ENCODE measurements at regions of chr3 and their contacts with region 1.

Region 1: GRCh38 chr3:18988614-18989229 is 159.6 kb upstream of the KCNH8 start:
- DNase-seq: peak in 4 of 5 donors; percentile 22 to 33 (median 32)
- H3K4me3 ChIP-seq: no peak overlapping the region
- H3K4me3 Mint-ChIP-seq: peak overlapping the region in 4 of 8 donors; percentile 2 to 52 (median 19)
- H3K27ac ChIP-seq: no peak overlapping the region
- H3K27ac Mint-ChIP-seq: no peak overlapping the region
- H3K4me1 ChIP-seq: no peaks in the 10 kb centered on the region
- H3K4me1 Mint-ChIP-seq: peaks cover 2 to 15% (median 12%) of the 10 kb centered on the region in 4 donors
- H3K27me3 ChIP-seq: peaks cover 6% of the 10 kb centered on the region
- H3K27me3 Mint-ChIP-seq: peaks cover 18 to 27% of the 10 kb centered on the region in 2 donors

Region 2: GRCh38 chr3:18847583-18848197 is 141.0 kb before region 1 on chr3:
- CTCF ChIA-PET with region 1: interaction called, 5 read pairs
- POLR2A ChIA-PET with region 1: no interaction called
- intact Hi-C with region 1: loop called (anchors 2 kb)
- DNase-seq: no peak
- H3K4me3 ChIP-seq: no peak overlapping the region
- H3K4me3 Mint-ChIP-seq: no peak overlapping the region
- H3K27ac ChIP-seq: no peak overlapping the region
- H3K27ac Mint-ChIP-seq: no peak overlapping the region
- H3K4me1 ChIP-seq: no peaks in the 10 kb centered on the region
- H3K4me1 Mint-ChIP-seq: peaks cover 4 to 18% (median 6%) of the 10 kb centered on the region in 4 donors
- H3K27me3 ChIP-seq: no peaks in the 10 kb centered on the region
- H3K27me3 Mint-ChIP-seq: peaks cover 1 to 5% of the 10 kb centered on the region in 2 donors